ENCODE measurements at regions of chr11 and their contacts with region 1.

Region 1: DNA sequence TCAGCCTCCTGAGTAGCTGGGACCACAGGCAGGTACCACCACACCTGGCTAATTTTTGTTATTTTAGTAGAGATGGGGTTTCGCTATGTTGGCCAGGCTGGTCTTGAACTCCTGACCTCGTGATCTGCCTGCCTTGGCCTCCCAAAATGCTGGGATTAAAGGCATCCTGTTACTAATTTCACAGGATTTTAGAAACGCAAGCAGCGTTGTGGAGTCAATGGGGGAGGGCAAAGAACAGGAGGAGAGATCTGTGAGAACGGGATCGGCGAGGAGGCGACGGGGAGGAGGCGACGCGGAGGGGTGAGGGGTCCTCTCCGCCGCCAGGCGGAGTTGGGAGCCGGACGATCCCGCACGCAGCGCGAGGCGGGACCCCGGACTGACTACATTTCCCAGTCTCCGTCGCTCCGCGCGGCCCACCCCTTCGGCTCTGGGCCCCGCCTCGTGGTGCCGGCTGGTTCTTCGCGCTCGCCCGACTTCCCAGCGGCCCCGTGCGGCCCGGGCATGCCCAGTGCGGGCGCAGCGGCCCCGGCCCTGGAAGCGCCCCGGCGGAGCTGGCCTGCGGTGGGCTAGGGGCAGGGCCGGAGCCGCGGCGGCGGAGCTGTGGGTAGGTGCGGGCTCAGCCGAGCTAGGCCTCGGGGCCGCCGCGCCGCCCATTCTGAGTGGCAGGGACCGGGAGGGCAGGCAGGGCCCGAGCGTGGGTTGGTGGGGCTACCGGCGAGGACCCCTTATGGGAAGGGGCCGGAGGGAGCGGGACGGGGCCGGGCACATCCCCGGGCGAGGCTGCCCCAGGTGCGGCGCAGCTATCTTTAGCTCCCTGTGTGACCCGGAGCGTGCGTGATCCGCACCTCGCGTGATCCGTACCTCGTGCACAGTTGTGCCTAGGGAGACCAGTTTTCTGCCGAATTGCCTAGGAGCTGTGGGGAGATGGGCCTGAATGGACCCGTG is at the start of gene EI24:
- DNase-seq: peak; percentile 86
- H3K4me3 Mint-ChIP-seq: peak within 1 kb of the TSS; percentile 89
- H3K27ac Mint-ChIP-seq: peak within 1 kb of the TSS; percentile 91
- H3K4me1 Mint-ChIP-seq: peaks cover 22% of the 10 kb centered on the region
- H3K27me3 Mint-ChIP-seq: no peaks in the 10 kb centered on the region
- total RNA-seq, gene EI24: 44.4 and 50.9 TPM in 2 replicates

Region 2: GRCh38 chr11:125592305-125593112 is 23.3 kb after region 1 on chr11 and contains the start of gene STT3A:
- intact Hi-C with region 1: loop called (anchors 1 kb)
- DNase-seq: peak; percentile 97
- H3K4me3 Mint-ChIP-seq: peak within 1 kb of the TSS; percentile 99
- H3K27ac Mint-ChIP-seq: peak within 1 kb of the TSS; percentile 92
- H3K4me1 Mint-ChIP-seq: peaks cover 38% of the 10 kb centered on the region
- H3K27me3 Mint-ChIP-seq: no peaks in the 10 kb centered on the region
- total RNA-seq, gene STT3A: 187 and 198 TPM in 2 replicates